ENCODE measurements at regions of chr9 and their contacts with region 1.

Region 1: GRCh38 chr9:34500623-34501267 is 22.0 kb downstream of the ENHO start:
- DNase-seq: no peak
- H3K4me3 ChIP-seq: no peak overlapping the region
- H3K27ac ChIP-seq: no peak overlapping the region
- H3K4me1 ChIP-seq: peaks cover 14 to 29% (median 27%) of the 10 kb centered on the region in 4 donors
- H3K27me3 ChIP-seq: no peaks in the 10 kb centered on the region
- CTCF ChIP-seq: peak in 2 of 3 experiments; percentile 90 to 97
- EP300 ChIP-seq: no peak
- POLR2A ChIP-seq: no peak

Region 2: GRCh38 chr9:34403554-34404380 is 97.0 kb before region 1 on chr9:
- intact Hi-C with region 1: loop called (anchors 2 kb)
- DNase-seq: no peak
- H3K4me3 ChIP-seq: no peak overlapping the region
- H3K27ac ChIP-seq: no peak overlapping the region
- H3K4me1 ChIP-seq: peaks cover 0 to 8% (median 3%) of the 10 kb centered on the region in 4 donors
- H3K27me3 ChIP-seq: no peaks in the 10 kb centered on the region
- CTCF ChIP-seq: peak; percentile 92 to 97 (median 96)
- EP300 ChIP-seq: no peak
- POLR2A ChIP-seq: no peak

Region 3: GRCh38 chr9:34437006-34437925 is 63.5 kb before region 1 on chr9:
- intact Hi-C with region 1: loop called (anchors 1 kb)
- DNase-seq: no peak
- H3K4me3 ChIP-seq: no peak overlapping the region
- H3K27ac ChIP-seq: no peak overlapping the region
- H3K4me1 ChIP-seq: peaks cover 13 to 17% (median 16%) of the 10 kb centered on the region in 4 donors
- H3K27me3 ChIP-seq: no peaks in the 10 kb centered on the region
- CTCF ChIP-seq: peak; percentile 57 to 77 (median 69)
- EP300 ChIP-seq: no peak
- POLR2A ChIP-seq: no peak

Measured in esophagus muscularis mucosa (tissue), 4 donors.